ENCODE measurements at regions of chr14 and their contacts with region 1.

Region 1: GRCh38 chr14:74867673-74868072 is 8.3 kb downstream of the PROX2 start:
- DNase-seq: no peak
- H3K4me3 ChIP-seq: no peak overlapping the region
- H3K27ac ChIP-seq: no peak overlapping the region
- H3K4me1 ChIP-seq: no peaks in the 10 kb centered on the region
- H3K27me3 ChIP-seq: no peaks in the 10 kb centered on the region
- CTCF ChIP-seq: no peak
- EP300 ChIP-seq: no peak
- POLR2A ChIP-seq: no peak
- RAD21 ChIP-seq: no peak

Region 2: DNA sequence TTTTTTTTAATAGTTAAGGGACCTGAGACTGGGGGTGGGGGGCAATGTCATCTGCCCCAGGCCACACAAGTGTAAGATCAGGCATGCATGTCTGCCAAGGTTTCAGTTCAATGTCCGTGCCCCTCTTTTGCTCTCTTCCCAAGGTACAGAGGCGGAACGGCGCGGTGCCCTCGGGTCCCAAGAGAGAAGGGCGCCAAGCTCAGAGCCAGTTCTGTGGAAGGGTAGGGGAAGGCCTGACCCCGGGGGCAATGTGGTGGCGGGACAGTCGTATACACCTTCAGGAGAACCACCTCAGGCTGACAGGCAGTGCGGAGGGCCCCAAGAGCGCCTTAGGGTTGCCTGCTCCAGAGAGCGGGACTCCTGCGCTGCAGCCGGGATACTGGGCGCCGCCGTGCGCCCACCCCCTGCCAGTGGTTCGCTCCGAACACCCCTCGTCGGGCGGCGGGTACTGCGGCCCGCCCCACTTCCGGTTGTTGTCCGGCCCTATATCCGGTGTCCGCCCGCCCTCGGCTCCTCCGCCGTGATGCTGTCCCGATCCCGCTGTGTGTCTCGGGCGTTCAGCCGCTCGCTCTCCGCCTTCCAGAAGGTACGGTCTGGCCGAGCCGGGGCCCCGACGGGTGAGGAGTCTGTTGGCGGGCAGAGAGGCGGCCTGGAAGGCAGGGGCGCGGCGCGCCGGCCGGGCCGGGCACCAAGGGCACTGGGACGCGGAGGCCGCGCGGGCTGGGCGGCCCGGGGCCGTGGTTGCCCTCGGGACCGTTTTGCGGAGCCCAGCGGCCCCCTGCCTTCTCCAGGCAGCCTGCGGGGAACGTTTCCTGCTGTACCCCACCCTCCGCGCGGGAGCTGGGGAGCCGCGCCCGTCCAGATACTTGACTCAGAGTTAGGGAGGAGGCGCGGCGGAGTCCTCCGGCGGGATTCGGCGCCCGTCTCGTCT is 14.0 kb after region 1 on chr14 and contains the start of gene DLST:
- CTCF ChIA-PET with region 1: interaction called, 364 read pairs
- POLR2A ChIA-PET with region 1: interaction called, 12 read pairs
- DNase-seq: peak; percentile 63 to 95
- H3K4me3 ChIP-seq: peak within 1 kb of the TSS; percentile 79 to 98 (median 91)
- H3K27ac ChIP-seq: peak within 1 kb of the TSS; percentile 79; the same call in 1 of the 2 replicates
- H3K4me1 ChIP-seq: peaks cover 11 to 26% (median 19%) of the 10 kb centered on the region in 4 experiments
- H3K27me3 ChIP-seq: no peaks in the 10 kb centered on the region
- CTCF ChIP-seq: no peak
- EP300 ChIP-seq: peak in 1 of 2 experiments; percentile 100; a peak in 2 of 3 replicates
- POLR2A ChIP-seq: peak; percentile 57 to 81
- RAD21 ChIP-seq: no peak; a peak in 1 of 4 replicates
- total RNA-seq, gene DLST: 111 and 117 TPM in 2 replicates

Region 3: DNA sequence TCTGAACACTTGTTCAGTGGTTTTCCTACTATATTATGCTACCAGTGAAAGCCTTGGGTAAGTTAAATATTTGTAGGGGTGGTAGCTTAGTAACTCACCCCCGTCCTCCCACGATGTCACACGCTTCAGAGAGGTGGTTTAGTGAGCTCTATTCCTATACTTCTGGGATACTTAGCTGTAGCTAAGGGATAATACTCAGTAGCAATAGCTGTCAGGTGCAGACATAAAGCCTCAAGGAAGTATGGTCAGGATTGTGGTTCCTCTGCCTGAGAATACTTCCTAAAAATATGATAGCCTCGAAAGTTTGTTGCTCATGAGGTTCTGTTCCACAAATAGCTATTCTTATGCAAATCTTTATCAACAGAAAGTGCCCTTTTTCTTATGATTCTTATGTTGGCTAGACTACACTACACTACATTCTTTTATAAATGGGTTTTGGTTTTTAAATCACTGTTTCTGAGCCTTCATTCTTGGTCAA is 26.0 kb after region 1 on chr14:
- CTCF ChIA-PET with region 1: interaction called, 509 read pairs
- POLR2A ChIA-PET with region 1: no interaction called
- DNase-seq: no peak
- H3K4me3 ChIP-seq: no peak overlapping the region
- H3K27ac ChIP-seq: no peak overlapping the region
- H3K4me1 ChIP-seq: no peaks in the 10 kb centered on the region; a peak in 1 of 7 replicates
- H3K27me3 ChIP-seq: no peaks in the 10 kb centered on the region
- CTCF ChIP-seq: no peak
- EP300 ChIP-seq: no peak
- POLR2A ChIP-seq: no peak
- RAD21 ChIP-seq: no peak

Region 4: GRCh38 chr14:74932401-74932901 is 64.8 kb after region 1 on chr14:
- CTCF ChIA-PET with region 1: no interaction called
- POLR2A ChIA-PET with region 1: no interaction called
- DNase-seq: no peak
- H3K4me3 ChIP-seq: no peak overlapping the region
- H3K27ac ChIP-seq: no peak overlapping the region
- H3K4me1 ChIP-seq: peaks cover 0 to 5% (median 0%) of the 10 kb centered on the region in 4 experiments; a peak in 1 of 7 replicates
- H3K27me3 ChIP-seq: no peaks in the 10 kb centered on the region
- CTCF ChIP-seq: no peak
- EP300 ChIP-seq: no peak
- POLR2A ChIP-seq: no peak
- RAD21 ChIP-seq: no peak

Measured in H1 (cell line).